ENCODE measurements at regions of chr21 and their contacts with region 1.

Region 1: DNA sequence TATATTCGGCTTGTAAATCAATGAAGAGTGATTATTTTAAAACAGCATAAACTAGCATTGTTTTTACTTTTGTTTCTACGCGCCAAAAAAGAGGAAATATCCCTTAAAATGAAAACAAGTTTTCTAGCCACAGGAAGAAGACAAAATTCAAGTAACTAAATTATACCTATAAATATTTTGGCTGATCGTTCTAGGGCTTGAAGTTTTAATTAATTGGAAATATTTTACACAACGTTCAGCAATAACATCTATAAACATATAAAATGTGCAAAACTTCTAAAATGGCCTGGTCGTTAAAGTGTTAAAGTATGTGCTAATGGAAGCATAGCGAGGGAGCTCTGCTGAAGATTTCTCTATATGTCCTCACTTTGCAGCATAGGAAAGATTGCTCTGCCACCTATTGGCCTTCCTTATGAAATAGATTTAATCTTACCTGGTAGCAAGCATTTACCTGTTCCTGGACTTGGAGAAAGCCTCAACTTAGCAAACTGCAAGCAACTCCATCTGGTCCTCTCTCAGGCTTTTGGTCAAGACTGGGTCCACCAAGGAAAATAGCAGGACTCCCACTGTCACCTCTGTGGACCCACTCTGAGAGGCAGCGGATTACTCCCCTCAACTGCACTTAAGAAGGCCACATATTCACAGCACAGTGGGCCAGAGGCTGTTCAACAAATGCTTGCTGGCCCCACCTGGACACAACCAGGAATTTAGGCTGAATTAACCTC is 351.3 kb upstream of the RUNX1 start:
- DNase-seq: peak; percentile 86
- H3K4me3 ChIP-seq: peak overlapping the region; percentile 52
- H3K27ac ChIP-seq: no peak overlapping the region
- H3K4me1 ChIP-seq: peaks cover 20% of the 10 kb centered on the region
- CTCF ChIP-seq: peak; percentile 95

Region 2: GRCh38 chr21:34745557-34746255 is 654.7 kb before region 1 on chr21:
- CTCF ChIA-PET with region 1: interaction called, 4 read pairs
- POLR2A ChIA-PET with region 1: interaction called, 3 read pairs
- intact Hi-C with region 1: loop called (anchors 1 kb)
- DNase-seq: peak; percentile 69
- H3K4me3 ChIP-seq: peak overlapping the region; percentile 12
- H3K27ac ChIP-seq: no peak overlapping the region
- H3K4me1 ChIP-seq: no peaks in the 10 kb centered on the region
- CTCF ChIP-seq: peak; percentile 93

Region 3: GRCh38 chr21:34801519-34802132 is 598.8 kb before region 1 on chr21:
- CTCF ChIA-PET with region 1: no interaction called
- POLR2A ChIA-PET with region 1: no interaction called
- intact Hi-C with region 1: loop called (anchors 1 kb)
- DNase-seq: peak; percentile 48
- H3K4me3 ChIP-seq: no peak overlapping the region
- H3K27ac ChIP-seq: no peak overlapping the region
- H3K4me1 ChIP-seq: no peaks in the 10 kb centered on the region
- CTCF ChIP-seq: peak; percentile 76

Region 4: DNA sequence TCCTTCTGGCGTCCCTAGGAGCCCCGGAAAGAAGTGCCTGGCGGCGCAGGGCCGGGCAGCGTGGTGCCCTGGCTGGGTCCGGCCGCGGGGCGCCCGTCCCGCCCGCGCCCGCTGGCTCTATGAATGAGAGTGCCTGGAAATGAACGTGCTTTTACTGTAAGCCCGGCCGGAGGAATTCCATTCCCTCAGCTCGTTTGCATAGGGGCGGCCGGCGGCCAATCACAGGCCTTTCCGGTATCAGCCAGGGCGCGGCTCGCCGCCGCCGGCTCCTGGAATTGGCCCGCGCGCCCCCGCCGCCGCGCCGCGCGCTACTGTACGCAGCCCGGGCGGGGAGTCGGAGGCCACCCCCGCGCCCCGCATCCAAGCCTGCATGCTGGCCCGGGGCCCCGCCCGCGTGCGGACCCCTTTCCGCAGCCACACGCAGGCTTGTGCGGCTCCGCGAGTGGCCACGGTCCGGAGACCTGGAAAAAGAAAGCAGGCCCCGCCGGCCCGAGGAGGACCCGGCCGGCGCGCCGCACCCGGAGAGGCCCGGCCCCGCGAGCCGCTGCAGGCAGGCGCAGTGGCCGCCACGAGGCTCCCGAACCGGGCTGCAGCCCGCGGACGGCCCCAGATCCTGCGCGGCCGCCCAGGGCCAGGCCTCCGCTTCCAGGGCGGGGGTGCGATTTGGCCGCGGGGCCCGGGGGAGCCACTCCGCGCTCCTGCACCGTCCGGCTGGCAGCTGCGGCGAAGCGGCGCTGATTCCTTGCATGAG is 511.7 kb before region 1 on chr21:
- CTCF ChIA-PET with region 1: no interaction called
- POLR2A ChIA-PET with region 1: no interaction called
- intact Hi-C with region 1: loop called (anchors 1 kb)
- DNase-seq: peak; percentile 72
- H3K4me3 ChIP-seq: peak overlapping the region; percentile 81
- H3K27ac ChIP-seq: peak overlapping the region; percentile 46
- H3K4me1 ChIP-seq: peaks cover 23% of the 10 kb centered on the region
- CTCF ChIP-seq: no peak

Region 5: DNA sequence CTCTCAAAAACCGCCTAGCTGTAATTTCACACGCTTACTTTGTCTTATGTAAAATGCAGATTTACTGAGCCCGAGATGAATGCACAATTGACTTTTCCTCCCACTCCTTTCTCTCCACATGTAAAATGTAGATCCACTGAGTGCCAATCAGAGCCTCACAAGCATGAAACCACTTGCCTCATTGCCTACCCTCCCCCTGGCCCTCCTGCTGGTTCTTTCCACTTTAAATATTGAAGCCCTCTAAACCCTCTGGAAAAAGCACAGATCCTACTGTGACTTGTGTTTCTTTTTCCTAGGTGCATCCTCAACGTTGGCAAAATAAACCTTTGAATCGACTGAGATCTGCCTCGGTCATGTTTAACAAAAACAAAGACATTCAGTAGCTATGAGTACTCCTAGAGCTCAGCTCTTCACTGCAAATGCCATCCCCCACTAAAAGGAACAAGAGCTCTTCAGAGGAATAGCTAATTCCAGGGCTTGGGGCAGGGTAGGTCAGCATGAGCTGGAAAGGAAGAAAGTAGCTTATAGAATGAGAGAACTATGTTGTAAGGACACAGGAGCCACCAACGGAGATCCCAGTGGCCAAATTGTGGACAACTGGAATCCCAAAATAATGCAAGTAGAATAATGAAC is 14.2 kb after region 1 on chr21:
- CTCF ChIA-PET with region 1: no interaction called
- POLR2A ChIA-PET with region 1: no interaction called
- intact Hi-C with region 1: no loop called
- DNase-seq: no peak
- H3K4me3 ChIP-seq: no peak overlapping the region
- H3K27ac ChIP-seq: no peak overlapping the region
- H3K4me1 ChIP-seq: no peaks in the 10 kb centered on the region
- CTCF ChIP-seq: no peak

Region 6: DNA sequence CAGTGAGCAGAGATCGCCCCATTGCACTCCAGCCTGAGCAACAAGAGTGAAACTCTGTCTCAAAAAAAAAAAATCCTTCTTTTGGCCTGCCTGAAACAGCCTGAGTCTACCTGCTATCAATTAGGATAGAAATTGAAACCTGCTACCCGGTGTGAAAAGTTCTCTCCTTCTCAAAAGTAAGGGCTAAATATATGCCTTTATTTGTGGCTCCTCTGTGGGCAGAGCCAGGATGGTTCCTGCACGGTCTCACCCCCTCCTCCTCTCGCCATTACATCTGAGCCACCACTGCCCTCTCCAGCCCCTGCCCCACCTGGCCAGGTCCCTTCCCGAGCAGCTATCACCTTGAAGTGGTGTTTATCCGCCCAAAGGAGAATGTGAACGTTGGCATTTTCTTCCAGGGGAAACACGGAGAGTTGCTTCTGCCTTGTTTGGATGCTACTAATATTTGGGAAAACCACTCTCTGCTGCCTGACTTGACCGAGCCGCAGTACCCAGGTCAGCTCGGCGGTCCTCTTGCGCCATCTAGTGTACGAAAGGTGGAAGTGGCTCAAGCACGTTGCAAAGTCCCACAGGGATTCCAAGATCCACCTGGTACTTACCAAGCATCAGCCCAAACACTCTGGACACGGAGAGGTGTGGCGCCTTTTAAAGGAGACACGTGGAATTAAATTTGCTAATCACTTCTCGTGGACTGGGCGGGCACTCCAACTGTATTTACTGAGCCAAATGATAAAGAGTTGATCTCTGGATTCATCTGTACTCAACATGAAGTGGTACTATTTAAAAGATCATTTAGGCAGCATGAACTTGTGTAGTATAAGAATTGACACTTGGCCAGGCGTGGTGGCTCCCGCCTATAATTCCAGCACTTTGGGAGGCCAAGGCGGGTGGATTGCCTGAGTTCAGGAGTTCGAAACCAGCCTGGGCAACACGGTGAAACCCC is 628.0 kb after region 1 on chr21:
- CTCF ChIA-PET with region 1: no interaction called
- POLR2A ChIA-PET with region 1: no interaction called
- intact Hi-C with region 1: loop called (anchors 10 kb)
- DNase-seq: peak; percentile 68
- H3K4me3 ChIP-seq: no peak overlapping the region
- H3K27ac ChIP-seq: no peak overlapping the region
- H3K4me1 ChIP-seq: peaks cover 5% of the 10 kb centered on the region
- CTCF ChIP-seq: peak; percentile 97

Region 7: DNA sequence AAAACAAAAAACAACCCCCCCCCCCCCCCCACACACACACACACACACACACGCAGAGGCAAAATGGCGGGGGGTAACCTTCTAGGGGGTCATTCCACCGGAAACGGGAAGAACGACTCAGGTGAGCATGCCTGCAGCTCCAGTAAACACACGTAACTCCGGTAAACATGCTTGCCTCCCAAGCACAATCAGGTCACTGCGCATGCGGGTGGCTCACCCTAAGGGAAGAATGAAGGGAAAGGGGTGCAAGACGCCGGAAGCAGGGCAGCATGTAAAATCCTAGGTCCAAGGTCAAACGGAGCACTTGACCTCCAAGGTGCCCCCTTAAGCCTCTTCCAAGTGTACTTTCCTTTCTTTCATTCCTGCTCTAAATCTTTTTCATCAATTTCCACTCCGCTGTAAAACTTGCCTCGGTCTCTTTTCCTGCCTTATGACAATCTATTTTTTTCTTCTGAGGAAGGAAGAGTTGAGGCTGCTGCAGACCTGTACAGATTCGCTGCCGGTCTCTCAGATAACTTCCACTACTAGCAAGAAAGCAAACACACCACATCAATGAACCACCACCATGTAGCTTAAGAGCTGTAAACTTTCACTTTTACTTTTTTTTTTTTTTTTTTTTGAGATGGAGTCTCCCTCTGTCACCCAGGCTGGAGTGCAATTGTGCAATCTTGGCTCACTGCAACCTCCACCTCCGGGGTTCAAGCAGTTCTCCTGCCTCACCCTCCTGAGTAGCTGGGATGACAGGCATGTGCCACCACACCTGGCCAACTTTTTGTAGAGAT is 713.4 kb after region 1 on chr21:
- CTCF ChIA-PET with region 1: no interaction called
- POLR2A ChIA-PET with region 1: no interaction called
- intact Hi-C with region 1: loop called (anchors 5 kb)
- DNase-seq: no peak
- H3K4me3 ChIP-seq: no peak overlapping the region
- H3K27ac ChIP-seq: no peak overlapping the region
- H3K4me1 ChIP-seq: peaks cover 13% of the 10 kb centered on the region
- CTCF ChIP-seq: no peak

Measured in OCI-LY7 (cell line).